ENCODE measurements at regions of chr17 and their contacts with region 1.

Region 1: GRCh38 chr17:50697663-50698274 is 9.9 kb downstream of the ANKRD40 start:
- DNase-seq: no peak
- H3K4me3 ChIP-seq: no peak overlapping the region
- H3K27ac ChIP-seq: no peak overlapping the region
- H3K4me1 ChIP-seq: no peaks in the 10 kb centered on the region
- H3K27me3 ChIP-seq: no peaks in the 10 kb centered on the region
- CTCF ChIP-seq: peak in 2 of 3 experiments; percentile 11 to 12; a peak in 1 of 4 replicates
- EP300 ChIP-seq: no peak
- POLR2A ChIP-seq: no peak
- RAD21 ChIP-seq: peak; percentile 25 to 37; a peak in 3 of 4 replicates

Region 2: GRCh38 chr17:50527155-50527762 is 170.5 kb before region 1 on chr17:
- CTCF ChIA-PET with region 1: no interaction called
- POLR2A ChIA-PET with region 1: no interaction called
- DNase-seq: no peak
- H3K4me3 ChIP-seq: no peak overlapping the region
- H3K27ac ChIP-seq: no peak overlapping the region
- H3K4me1 ChIP-seq: peaks cover 3 to 10% (median 6%) of the 10 kb centered on the region in 4 experiments; a peak in 6 of 7 replicates
- H3K27me3 ChIP-seq: peaks cover 0 to 5% (median 0%) of the 10 kb centered on the region in 4 experiments; a peak in 2 of 7 replicates
- CTCF ChIP-seq: no peak
- EP300 ChIP-seq: no peak
- POLR2A ChIP-seq: no peak
- RAD21 ChIP-seq: no peak

Region 3: GRCh38 chr17:50618300-50618699 is 79.5 kb before region 1 on chr17:
- CTCF ChIA-PET with region 1: interaction called, 391 read pairs
- POLR2A ChIA-PET with region 1: no interaction called
- DNase-seq: no peak
- H3K4me3 ChIP-seq: no peak overlapping the region
- H3K27ac ChIP-seq: no peak overlapping the region
- H3K4me1 ChIP-seq: peaks cover 0 to 17% (median 8%) of the 10 kb centered on the region in 4 experiments; a peak in 6 of 7 replicates
- H3K27me3 ChIP-seq: peaks cover 0 to 2% (median 0%) of the 10 kb centered on the region in 4 experiments; a peak in 2 of 7 replicates
- CTCF ChIP-seq: no peak
- EP300 ChIP-seq: no peak
- POLR2A ChIP-seq: no peak
- RAD21 ChIP-seq: no peak

Region 4: DNA sequence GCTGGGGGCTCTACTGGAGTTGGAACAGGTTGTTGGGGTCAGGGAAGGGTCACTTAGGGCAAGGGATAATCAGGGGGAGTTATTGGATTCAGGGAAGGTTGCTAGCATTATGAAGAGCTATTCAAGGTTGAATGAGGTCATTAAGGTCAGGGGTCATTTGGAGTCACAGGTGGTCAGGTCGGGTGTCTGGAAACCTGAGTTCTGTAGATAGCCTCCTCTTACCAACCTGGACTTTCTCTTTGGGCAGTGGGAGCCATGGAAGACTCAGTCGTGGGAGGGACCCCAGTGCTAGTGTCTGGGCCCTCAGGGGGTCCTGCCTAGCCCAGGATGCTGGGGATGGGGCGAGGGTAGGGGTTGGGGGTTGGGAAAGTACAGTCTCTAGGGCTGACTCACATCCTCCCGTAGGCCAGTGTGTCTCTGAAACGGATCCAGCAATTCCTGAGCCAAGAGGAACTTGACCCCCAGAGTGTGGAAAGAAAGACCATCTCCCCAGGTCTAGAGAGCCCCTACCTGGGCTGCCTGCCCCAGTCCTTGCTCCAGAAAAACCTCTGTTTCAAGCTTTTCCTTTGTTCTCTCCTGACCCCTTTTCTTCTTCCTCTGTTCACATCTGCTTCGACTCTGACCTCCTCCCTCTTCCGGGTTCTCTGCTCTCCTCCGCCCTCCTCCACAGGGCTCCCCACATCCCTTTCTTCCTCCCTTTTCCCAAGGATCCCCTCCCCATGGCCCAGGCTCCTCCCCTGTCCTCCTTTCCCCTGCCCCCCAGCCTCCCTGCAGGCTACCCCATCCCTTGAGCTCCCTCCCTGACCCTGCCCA is 29.5 kb before region 1 on chr17:
- CTCF ChIA-PET with region 1: interaction called, 96 read pairs
- POLR2A ChIA-PET with region 1: interaction called, 5 read pairs
- DNase-seq: no peak
- H3K4me3 ChIP-seq: no peak overlapping the region
- H3K27ac ChIP-seq: no peak overlapping the region
- H3K4me1 ChIP-seq: peaks cover 0 to 14% (median 3%) of the 10 kb centered on the region in 4 experiments; a peak in 5 of 7 replicates
- H3K27me3 ChIP-seq: no peaks in the 10 kb centered on the region
- CTCF ChIP-seq: no peak
- EP300 ChIP-seq: no peak
- POLR2A ChIP-seq: no peak
- RAD21 ChIP-seq: no peak